Activated T-helper 1 cell treated with anti-CD3 and anti-CD28 coated beads, Interleukin-12 subunit alpha, Interleukin-12 subunit beta, Interleukin-2, Interleukin-4 antibody, amounts not matched to agents 30 ng/mL and 10 ng/mL and 1 ng/mL, durations not matched to agents 14 hours and 24 hours and 36 hours (primary cell): ENCODE measurements at regions of chr5 and their contacts with region 1.

Region 1: GRCh38 chr5:43019614-43020293 is 20.4 kb downstream of the ANXA2R start:
- DNase-seq: peak; percentile 83
- H3K4me3 Mint-ChIP-seq: peak overlapping the region; percentile 90
- H3K27ac Mint-ChIP-seq: peak overlapping the region; percentile 97
- H3K4me1 Mint-ChIP-seq: peaks cover 43% of the 10 kb centered on the region
- H3K27me3 Mint-ChIP-seq: no peaks in the 10 kb centered on the region

Region 2: GRCh38 chr5:42908509-42909488 is 111.0 kb before region 1 on chr5:
- intact Hi-C with region 1: loop called (anchors 1 kb)
- DNase-seq: peak; percentile 84
- H3K4me3 Mint-ChIP-seq: peak overlapping the region; percentile 81
- H3K27ac Mint-ChIP-seq: peak overlapping the region; percentile 50
- H3K4me1 Mint-ChIP-seq: peaks cover 12% of the 10 kb centered on the region
- H3K27me3 Mint-ChIP-seq: peaks cover 26% of the 10 kb centered on the region

Region 3: GRCh38 chr5:43034591-43034968 is 14.8 kb after region 1 on chr5:
- intact Hi-C with region 1: loop called (anchors 1 kb)
- DNase-seq: no peak
- H3K4me3 Mint-ChIP-seq: no peak overlapping the region
- H3K27ac Mint-ChIP-seq: no peak overlapping the region
- H3K4me1 Mint-ChIP-seq: peaks cover 40% of the 10 kb centered on the region
- H3K27me3 Mint-ChIP-seq: no peaks in the 10 kb centered on the region

Region 4: DNA sequence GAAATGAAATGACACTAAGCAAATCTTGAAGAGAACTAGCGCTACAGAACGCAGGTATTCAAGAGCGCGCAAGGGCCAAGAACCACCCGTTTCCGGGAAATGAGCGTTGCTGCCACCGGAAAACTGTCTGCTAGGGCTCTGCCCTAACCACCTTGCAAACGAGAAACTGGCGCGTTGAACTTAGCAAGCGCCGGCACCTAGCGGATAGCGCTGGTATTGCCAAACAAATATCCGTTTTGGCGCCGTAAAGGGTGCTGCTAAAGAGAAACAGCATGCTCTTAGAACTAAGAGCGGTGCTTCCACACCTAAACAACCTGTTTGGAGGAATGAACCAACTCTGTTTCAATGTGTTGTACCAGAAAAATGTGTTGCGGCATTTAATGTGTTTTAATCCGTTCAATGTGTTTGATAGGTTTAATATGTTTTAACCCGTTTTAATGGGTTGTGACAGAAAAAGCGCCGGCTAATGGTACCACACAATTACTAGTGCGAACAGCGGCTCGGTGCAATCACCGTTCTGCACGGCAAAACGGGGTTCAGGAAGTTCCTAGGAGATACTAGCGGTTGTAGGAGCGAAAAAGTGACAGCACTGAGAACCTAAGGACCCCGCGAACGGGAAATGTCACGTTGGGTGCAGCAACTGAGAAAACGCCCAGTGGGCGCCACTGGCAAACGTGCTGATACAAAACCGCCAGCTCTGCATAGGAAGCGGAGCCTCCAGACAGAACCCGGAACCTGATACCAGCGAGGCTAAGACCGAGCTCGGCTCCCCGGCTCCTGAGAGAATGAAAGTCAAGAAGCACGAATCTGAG is 20.7 kb after region 1 on chr5 and contains the start of gene ANXA2R:
- intact Hi-C with region 1: loop called (anchors 1 kb)
- DNase-seq: peak; percentile 93
- H3K4me3 Mint-ChIP-seq: peak within 1 kb of the TSS; percentile 82
- H3K27ac Mint-ChIP-seq: peak within 1 kb of the TSS; percentile 86
- H3K4me1 Mint-ChIP-seq: peaks cover 59% of the 10 kb centered on the region
- H3K27me3 Mint-ChIP-seq: no peaks in the 10 kb centered on the region
- total RNA-seq, gene ANXA2R: 0.88 and 0.93 TPM in 2 replicates